Natural killer cell (primary cell): ENCODE measurements at regions of chr18 and their contacts with region 1.

Region 1: DNA sequence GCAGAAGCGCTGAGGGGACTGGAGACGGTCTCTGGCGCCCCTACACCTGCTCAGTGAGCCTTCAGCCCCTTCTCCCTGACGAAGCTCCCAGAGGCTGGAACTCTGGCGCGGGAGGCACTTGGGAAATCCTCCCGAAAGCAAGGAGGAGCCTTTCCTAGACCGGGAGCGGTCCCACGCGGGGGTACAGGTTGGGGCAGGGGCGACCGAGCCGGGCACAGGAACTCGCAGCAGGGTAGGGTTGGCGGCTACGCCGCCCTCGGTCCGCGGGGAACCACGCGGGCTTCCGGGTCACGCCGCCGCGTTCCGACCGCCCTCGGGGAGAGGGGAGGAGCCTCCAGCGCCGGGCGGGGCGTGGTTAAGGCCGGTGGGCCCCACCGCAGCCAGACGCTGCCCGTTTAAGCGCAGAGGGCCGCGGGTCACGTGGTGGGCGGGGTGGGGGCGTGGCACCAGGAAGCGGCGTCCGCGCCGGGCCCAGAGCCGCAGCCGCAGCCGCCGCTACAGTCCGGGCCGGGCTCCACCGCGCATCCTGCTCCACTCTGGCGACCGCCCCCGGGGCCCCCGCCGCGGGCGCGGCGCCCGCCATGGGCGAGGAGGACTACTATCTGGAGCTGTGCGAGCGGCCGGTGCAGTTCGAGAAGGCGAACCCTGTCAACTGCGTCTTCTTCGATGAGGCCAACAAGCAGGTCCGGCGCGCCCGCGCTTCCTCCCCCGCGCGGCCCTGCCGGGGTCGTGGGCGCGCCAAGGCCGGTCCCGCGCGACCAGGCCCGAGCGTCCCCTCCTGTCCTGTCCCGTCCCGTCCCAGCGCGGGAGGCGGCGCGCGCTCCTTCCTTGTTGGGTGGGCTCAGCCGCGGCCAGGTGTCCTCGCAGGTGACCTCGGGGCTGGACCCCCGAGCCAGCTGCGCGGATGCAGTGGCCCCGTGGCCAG is at the start of gene RMC1:
- DNase-seq: peak; percentile 97 to 98
- ATAC-seq: peak; percentile 89 to 97 (median 91)
- H3K4me3 ChIP-seq: peak within 1 kb of the TSS; percentile 81
- H3K4me3 Mint-ChIP-seq: peak within 1 kb of the TSS; percentile 98
- H3K27ac ChIP-seq: peak within 1 kb of the TSS; percentile 90
- H3K27ac Mint-ChIP-seq: peak within 1 kb of the TSS; percentile 94
- H3K4me1 ChIP-seq: peaks cover 47% of the 10 kb centered on the region
- H3K4me1 Mint-ChIP-seq: peaks cover 53 to 55% of the 10 kb centered on the region in 2 donors
- H3K27me3 ChIP-seq: no peaks in the 10 kb centered on the region
- H3K27me3 Mint-ChIP-seq: no peaks in the 10 kb centered on the region
- CTCF ChIP-seq: no peak
- total RNA-seq, gene RMC1: 71.1 to 84.4 (median 77.2) TPM

Region 2: GRCh38 chr18:23452728-23453679 is 50.3 kb before region 1 on chr18 and contains the start of gene RIOK3:
- intact Hi-C with region 1: loop called (anchors 2 kb)
- DNase-seq: peak; percentile 92
- ATAC-seq: peak; percentile 94 to 99 (median 97)
- H3K4me3 ChIP-seq: peak within 1 kb of the TSS; percentile 85
- H3K4me3 Mint-ChIP-seq: peak within 1 kb of the TSS; percentile 98
- H3K27ac ChIP-seq: peak within 1 kb of the TSS; percentile 81
- H3K27ac Mint-ChIP-seq: peak within 1 kb of the TSS; percentile 86 to 91
- H3K4me1 ChIP-seq: peaks cover 10% of the 10 kb centered on the region
- H3K4me1 Mint-ChIP-seq: peaks cover 39 to 47% of the 10 kb centered on the region in 2 donors
- H3K27me3 ChIP-seq: no peaks in the 10 kb centered on the region
- H3K27me3 Mint-ChIP-seq: no peaks in the 10 kb centered on the region
- CTCF ChIP-seq: no peak
- total RNA-seq, gene RIOK3: 164 to 233 (median 182) TPM

Region 3: GRCh38 chr18:23573626-23574431 is 70.5 kb after region 1 on chr18:
- intact Hi-C with region 1: loop called (anchors 5 kb)
- DNase-seq: peak; percentile 49 to 65
- ATAC-seq: peak; percentile 52 to 67 (median 57)
- H3K4me3 ChIP-seq: no peak overlapping the region
- H3K4me3 Mint-ChIP-seq: peak overlapping the region; percentile 91
- H3K27ac ChIP-seq: peak overlapping the region; percentile 75
- H3K27ac Mint-ChIP-seq: peak overlapping the region; percentile 94 to 99
- H3K4me1 ChIP-seq: peaks cover 67% of the 10 kb centered on the region
- H3K4me1 Mint-ChIP-seq: peaks cover 68 to 76% of the 10 kb centered on the region in 2 donors
- H3K27me3 ChIP-seq: no peaks in the 10 kb centered on the region
- H3K27me3 Mint-ChIP-seq: no peaks in the 10 kb centered on the region
- CTCF ChIP-seq: no peak

Region 4: GRCh38 chr18:23703057-23703986 is 200.0 kb after region 1 on chr18:
- intact Hi-C with region 1: loop called (anchors 2 kb)
- DNase-seq: peak in 1 of 2 donors; percentile 68
- ATAC-seq: peak in 2 of 3 donors; percentile 64 to 74
- H3K4me3 ChIP-seq: no peak overlapping the region
- H3K4me3 Mint-ChIP-seq: no peak overlapping the region
- H3K27ac ChIP-seq: no peak overlapping the region
- H3K27ac Mint-ChIP-seq: no peak overlapping the region
- H3K4me1 ChIP-seq: no peaks in the 10 kb centered on the region
- H3K4me1 Mint-ChIP-seq: no peaks in the 10 kb centered on the region
- H3K27me3 ChIP-seq: no peaks in the 10 kb centered on the region
- H3K27me3 Mint-ChIP-seq: peaks cover 20 to 36% of the 10 kb centered on the region in 2 donors
- CTCF ChIP-seq: peak; percentile 38